GM10248 (cell line): ENCODE measurements at regions of chr3 and their contacts with region 1.

Region 1: GRCh38 chr3:31242026-31242960 is 290.4 kb upstream of the STT3B start:
- DNase-seq: no peak
- CTCF ChIP-seq: no peak

Region 2: GRCh38 chr3:31166249-31166885 is 75.9 kb before region 1 on chr3:
- CTCF ChIA-PET with region 1: no interaction called
- POLR2A ChIA-PET with region 1: no interaction called
- DNase-seq: no peak
- CTCF ChIP-seq: no peak

Region 3: GRCh38 chr3:31219131-31219843 is 23.0 kb before region 1 on chr3:
- CTCF ChIA-PET with region 1: interaction called, 40 read pairs
- POLR2A ChIA-PET with region 1: interaction called, 7 read pairs
- DNase-seq: peak; percentile 30
- CTCF ChIP-seq: no peak

Region 4: DNA sequence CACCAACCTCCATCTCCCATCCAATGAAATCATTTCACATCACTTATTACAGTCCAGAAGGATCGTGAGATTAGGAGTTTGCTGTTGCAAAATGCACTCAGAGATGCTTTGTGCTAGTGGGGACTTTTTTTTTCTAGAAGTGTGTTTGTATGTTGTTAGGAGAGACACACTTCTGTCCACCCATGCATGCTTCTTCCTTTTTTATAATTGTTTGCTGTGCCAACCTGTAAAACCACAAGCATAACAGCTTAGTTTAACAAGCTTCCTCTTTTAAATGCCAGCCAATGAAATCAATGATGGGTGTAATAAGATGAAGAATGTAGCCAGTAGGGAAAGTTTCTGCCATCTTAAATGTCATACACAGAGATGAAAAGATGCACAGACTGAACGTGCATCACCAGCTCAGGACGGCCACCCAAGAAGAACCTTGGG is 15.1 kb before region 1 on chr3:
- CTCF ChIA-PET with region 1: interaction called, 40 read pairs
- POLR2A ChIA-PET with region 1: interaction called, 6 read pairs
- DNase-seq: no peak
- CTCF ChIP-seq: no peak

Region 5: DNA sequence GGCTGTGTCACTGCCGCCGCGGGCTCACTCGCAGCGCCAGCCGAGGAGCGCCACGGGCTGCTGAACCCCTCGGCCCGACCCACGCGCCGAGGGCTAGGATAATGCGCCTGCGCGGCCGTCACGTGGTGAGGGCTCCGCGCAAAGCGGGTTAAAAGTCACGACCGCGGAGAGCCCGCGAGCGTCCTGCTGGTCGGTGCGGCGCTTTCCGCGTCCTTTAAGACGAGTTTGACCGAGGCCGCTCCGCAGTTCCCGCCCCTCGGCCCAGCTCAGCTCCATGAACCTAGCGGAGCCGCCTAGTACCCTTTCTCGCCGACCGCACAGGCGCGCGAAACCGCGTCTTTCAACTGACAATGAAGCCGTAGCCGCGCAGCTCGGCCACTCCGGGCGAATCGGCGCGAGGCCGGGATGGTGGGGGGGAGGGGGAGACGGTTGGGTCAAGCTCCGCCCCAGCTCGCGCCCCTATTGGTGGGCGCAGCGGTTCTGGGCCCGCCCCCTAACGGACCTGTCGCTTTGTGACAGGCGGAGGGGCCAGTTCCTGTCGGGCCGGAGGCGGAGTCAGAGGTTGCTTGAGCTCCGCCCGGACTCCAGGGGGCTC is 289.8 kb after region 1 on chr3:
- CTCF ChIA-PET with region 1: interaction called, 14 read pairs
- POLR2A ChIA-PET with region 1: interaction called, 10 read pairs
- DNase-seq: peak; percentile 98
- CTCF ChIP-seq: peak; percentile 0